ENCODE measurements at regions of chr18 and their contacts with region 1.

Region 1: DNA sequence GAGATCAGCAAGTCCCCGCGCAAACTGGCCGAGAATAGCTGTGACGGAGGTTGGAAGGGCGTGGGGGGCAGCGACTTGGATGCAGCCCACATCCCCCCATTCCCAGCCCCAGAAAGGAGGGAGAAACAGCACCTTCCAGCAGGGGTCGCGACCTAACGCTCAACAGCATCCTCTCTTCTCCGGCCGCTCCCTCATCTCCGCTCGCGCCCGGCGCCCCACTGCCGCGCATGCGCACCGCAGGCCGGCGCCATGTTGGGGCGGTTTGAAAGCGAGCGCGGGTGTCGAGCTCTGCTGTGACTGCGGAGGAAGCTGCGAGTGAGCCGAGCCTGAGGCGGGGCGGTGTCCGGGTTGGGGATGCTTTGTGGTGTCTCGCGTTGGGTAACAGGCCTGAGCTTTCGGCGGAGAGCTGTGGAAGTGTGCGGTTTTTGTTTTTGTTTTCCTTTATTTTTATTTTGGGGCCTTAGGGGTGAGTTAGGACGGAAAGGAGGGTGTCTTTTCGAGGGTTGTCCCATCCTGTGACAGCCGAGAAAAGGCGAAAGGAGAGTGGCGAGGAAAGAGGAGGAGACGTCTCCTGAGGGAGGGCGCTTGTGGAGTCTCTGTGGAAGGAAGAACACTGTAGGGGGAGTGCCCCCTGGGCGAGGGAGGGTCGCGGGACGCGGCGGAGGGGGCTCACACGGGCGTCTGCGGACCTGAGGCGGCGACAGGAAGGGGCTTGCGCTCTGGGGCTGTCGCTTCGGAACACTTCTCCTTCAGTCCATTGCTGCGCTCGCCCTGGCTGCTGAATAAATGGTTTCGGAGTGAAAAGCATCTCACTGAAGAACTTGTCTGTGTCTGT is at the starts of genes C18orf54 and STARD6:
- DNase-seq: peak; percentile 91
- H3K4me3 Mint-ChIP-seq: peak within 1 kb of the TSS; percentile 100
- H3K27ac Mint-ChIP-seq: peak within 1 kb of the TSS; percentile 99
- H3K4me1 Mint-ChIP-seq: peaks cover 6% of the 10 kb centered on the region
- H3K27me3 Mint-ChIP-seq: no peaks in the 10 kb centered on the region
- CTCF ChIP-seq: peak; percentile 62
- total RNA-seq, gene C18orf54: 4.4 and 5.5 TPM in 2 replicates
- total RNA-seq, gene STARD6: not detected in 2 replicates

Region 2: DNA sequence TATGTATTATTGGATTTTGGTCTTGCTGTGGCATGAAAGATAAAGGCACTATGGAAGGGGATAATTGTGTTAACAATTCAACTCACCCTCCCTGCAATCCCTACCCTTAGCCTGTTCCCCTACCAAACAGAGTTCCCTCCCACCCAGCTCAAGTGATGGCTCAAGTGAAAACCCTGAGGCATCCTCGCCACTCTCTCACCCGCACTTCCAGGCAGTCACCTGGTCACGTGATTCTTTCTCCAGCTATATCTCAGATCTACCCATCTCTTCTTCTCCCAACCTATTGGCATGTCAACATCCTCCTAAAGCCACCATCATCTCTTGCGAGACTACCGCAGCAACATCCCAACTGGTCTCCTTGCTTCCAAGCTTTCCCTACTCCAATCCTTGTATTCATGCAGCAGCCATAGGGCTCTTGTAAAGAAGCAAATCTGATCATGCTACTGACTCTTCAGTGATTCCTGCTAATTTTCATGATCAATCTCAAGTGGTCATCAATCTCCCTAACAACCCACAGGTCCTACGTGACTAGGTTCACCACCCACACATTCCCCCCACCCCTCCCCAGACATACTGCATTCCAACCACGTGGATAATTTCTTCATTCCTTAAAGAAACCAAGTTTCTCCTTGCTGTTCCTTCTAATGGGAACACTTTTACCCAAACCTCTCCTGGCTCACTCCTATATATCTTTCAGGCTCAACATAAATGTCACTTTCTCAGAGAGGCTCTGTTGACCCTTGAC is 200.1 kb before region 1 on chr18:
- CTCF ChIA-PET with region 1: no interaction called
- POLR2A ChIA-PET with region 1: no interaction called
- intact Hi-C with region 1: loop called (anchors 5 kb)
- DNase-seq: no peak
- H3K4me3 Mint-ChIP-seq: no peak overlapping the region
- H3K27ac Mint-ChIP-seq: peak overlapping the region; percentile 43
- H3K4me1 Mint-ChIP-seq: peaks cover 24% of the 10 kb centered on the region
- H3K27me3 Mint-ChIP-seq: no peaks in the 10 kb centered on the region
- CTCF ChIP-seq: no peak

Measured in MCF 10A (cell line).